ENCODE measurements at regions of chr17 and their contacts with region 1.

Region 1: DNA sequence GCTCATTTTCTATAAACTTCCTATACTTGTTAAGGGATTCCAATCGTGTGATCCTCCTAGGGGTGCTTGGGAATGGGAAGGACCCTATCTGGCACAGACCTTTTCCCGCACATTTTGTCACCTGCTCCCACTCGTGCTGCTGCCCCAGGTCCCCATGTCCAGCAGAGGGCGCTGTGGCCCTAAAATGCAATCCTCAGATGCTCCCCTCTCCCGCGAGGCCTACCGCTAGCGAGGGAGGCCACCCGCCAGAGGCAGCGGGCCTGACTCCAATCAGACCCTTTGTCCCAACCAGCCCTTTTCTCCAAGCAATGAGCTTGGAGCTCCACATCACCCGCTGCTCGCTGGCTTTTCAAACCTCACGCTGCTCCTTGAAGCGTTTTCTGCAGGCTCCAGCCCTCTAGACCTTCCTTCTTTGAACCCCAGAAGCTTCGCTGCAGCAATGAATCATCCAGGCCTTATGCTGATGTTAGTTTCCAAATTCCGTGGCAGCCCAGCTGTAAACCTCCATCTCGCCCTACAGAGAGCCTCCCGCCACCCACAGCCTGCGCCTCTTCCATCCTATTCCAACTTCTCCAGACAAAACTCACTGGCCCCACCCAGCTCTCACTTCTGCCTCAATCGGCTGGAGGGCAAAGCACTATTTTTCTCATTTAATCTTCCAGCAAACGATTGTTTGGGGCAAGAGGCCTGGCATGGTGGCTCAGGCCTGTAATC is 23.6 kb upstream of the FZD2 start:
- H3K4me3 ChIP-seq: no peak overlapping the region
- H3K27ac ChIP-seq: peak overlapping the region; percentile 58
- H3K4me1 ChIP-seq: no peaks in the 10 kb centered on the region; the same call in 1 of the 2 replicates
- CTCF ChIP-seq: peak; percentile 97

Region 2: DNA sequence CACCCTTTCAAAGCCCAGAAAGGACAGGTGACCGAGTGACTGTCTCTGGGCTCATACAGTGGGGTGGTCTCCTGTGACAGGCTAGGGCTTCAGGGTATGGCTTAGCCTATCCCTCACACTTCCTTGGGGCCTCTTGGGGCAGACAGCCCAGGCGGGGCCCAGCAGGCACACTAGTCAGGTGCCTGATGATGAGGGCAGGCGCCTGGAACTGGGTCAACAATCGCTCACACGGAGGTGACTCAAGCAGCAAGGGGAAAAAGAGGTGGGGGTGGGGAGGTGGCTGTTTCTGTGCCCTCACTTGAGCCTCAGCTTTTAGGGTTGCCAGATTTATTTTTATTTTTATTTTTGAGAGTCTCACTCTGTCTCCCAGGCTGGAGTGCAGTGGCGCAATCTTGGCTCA is 195.0 kb before region 1 on chr17:
- CTCF ChIA-PET with region 1: no interaction called
- POLR2A ChIA-PET with region 1: no interaction called
- H3K4me3 ChIP-seq: no peak overlapping the region
- H3K27ac ChIP-seq: no peak overlapping the region
- H3K4me1 ChIP-seq: no peaks in the 10 kb centered on the region
- CTCF ChIP-seq: no peak

Region 3: GRCh38 chr17:44565866-44566443 is 32.3 kb after region 1 on chr17:
- CTCF ChIA-PET with region 1: interaction called, 12 read pairs
- POLR2A ChIA-PET with region 1: interaction called, 4 read pairs
- H3K4me3 ChIP-seq: no peak overlapping the region
- H3K27ac ChIP-seq: no peak overlapping the region
- H3K4me1 ChIP-seq: peaks cover 7% of the 10 kb centered on the region; the same call in 1 of the 2 replicates
- CTCF ChIP-seq: no peak

Region 4: DNA sequence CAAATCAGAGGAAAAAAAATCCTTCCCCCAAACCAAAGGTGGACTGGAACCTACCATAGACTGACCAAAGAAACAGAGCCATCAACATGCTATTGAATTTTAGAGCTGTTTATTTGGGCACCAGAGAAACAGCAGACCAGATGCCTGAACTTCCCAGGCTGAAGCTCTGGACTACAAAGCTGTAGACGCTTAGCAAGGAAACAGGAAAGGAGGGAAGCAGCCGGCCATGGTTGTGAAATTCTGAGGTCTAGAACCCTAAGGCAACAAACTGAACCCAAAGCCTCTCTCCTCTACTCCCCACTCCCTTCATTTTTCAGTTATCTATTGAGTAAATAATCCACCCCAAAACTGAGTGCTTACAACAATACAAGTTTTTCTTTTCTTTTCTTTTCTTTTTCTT is 77.2 kb after region 1 on chr17:
- CTCF ChIA-PET with region 1: interaction called, 16 read pairs
- POLR2A ChIA-PET with region 1: no interaction called
- H3K4me3 ChIP-seq: no peak overlapping the region
- H3K27ac ChIP-seq: no peak overlapping the region
- H3K4me1 ChIP-seq: no peaks in the 10 kb centered on the region; the same call in 1 of the 2 replicates
- CTCF ChIP-seq: no peak

Region 5: GRCh38 chr17:44642834-44643233 is 109.1 kb after region 1 on chr17:
- CTCF ChIA-PET with region 1: interaction called, 86 read pairs
- POLR2A ChIA-PET with region 1: no interaction called
- H3K4me3 ChIP-seq: no peak overlapping the region
- H3K27ac ChIP-seq: no peak overlapping the region
- H3K4me1 ChIP-seq: no peaks in the 10 kb centered on the region
- CTCF ChIP-seq: no peak

Region 6: GRCh38 chr17:44672479-44673093 is 138.9 kb after region 1 on chr17:
- CTCF ChIA-PET with region 1: interaction called, 74 read pairs
- POLR2A ChIA-PET with region 1: no interaction called
- H3K4me3 ChIP-seq: no peak overlapping the region
- H3K27ac ChIP-seq: no peak overlapping the region
- H3K4me1 ChIP-seq: no peaks in the 10 kb centered on the region
- CTCF ChIP-seq: no peak

Measured in HEK293 (cell line).